Activated naive CD4-positive, alpha-beta T cell treated with anti-CD3 and anti-CD28 coated beads, Interleukin-2, amount 10 ng/mL, durations not matched to agents 7 days and 5 days (primary cell): ENCODE measurements at regions of chr2 and their contacts with region 1.

Region 1: DNA sequence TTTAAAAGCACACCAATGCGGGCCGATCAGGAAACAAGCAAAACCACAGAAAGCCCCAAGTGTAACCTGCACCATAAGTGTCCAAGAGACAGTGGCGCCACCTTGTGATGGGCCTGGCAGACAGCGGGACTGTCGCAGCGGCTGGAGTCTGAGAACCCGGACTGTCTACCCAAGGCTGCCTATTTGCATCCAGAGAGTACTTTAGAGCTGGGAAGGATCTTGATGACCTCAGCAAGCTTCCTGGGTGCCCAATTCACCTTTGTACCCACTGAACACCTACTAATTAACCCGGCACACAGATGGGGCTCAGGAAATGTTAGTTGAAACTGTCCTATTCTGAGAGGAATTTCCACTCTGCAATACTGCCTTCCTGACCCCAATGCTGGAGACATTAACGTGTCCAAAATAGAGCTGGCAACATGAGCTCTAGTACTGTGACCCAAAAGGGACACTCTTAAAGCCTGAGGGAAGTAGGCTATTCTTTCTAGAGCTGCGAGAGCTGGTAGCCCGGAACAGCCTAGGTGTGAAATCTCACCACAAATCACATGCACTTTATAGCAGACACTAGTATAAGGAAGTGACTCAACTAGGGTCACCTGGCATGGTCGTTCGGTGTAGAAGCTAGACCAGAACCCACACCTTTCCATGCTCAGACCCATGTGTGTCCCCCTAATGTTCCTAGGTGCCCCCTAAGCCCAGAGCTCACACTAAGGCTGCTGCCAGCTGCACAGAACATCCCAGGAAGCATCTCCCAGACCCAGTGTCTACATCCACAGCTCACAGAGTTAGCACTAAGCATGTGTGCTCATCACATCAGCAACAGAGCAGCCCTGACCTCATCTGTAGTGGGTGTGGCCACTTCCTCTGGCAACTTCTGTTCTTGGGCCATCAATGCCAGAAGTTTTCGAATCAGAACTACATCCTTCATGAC is 25.4 kb downstream of the POLR1A start:
- DNase-seq: peak; percentile 92
- H3K4me3 Mint-ChIP-seq: no peak overlapping the region
- H3K27ac Mint-ChIP-seq: peak overlapping the region; percentile 81
- H3K4me1 Mint-ChIP-seq: peaks cover 45% of the 10 kb centered on the region
- H3K27me3 Mint-ChIP-seq: no peaks in the 10 kb centered on the region

Region 2: GRCh38 chr2:85750587-85751575 is 329.4 kb before region 1 on chr2:
- CTCF ChIA-PET with region 1: interaction called, 17 read pairs
- DNase-seq: peak; percentile 78
- H3K4me3 Mint-ChIP-seq: no peak overlapping the region
- H3K27ac Mint-ChIP-seq: no peak overlapping the region
- H3K4me1 Mint-ChIP-seq: peaks cover 17% of the 10 kb centered on the region
- H3K27me3 Mint-ChIP-seq: peaks cover 100% of the 10 kb centered on the region

Region 3: DNA sequence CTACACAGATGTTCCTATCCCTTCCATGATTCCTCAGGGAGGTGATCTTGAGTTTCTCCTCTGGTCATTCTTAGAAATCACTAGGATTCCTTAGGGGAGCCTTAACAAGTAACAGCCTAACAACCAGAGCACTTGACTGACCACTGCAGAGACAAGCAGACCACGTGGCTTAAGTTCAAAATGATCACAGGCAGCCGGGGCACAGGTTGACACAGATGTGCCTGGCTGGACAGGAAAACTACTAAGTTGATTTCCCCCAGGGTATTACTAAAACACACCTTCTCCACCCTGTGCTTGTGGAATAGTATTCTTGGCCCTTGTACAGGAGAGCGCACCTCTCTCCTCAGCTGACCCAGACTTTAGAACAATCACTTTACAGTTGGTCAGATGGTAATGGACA is 221.4 kb before region 1 on chr2:
- CTCF ChIA-PET with region 1: interaction called, 10 read pairs
- DNase-seq: no peak
- H3K4me3 Mint-ChIP-seq: no peak overlapping the region
- H3K27ac Mint-ChIP-seq: no peak overlapping the region
- H3K4me1 Mint-ChIP-seq: peaks cover 70% of the 10 kb centered on the region
- H3K27me3 Mint-ChIP-seq: no peaks in the 10 kb centered on the region

Region 4: GRCh38 chr2:86035883-86036668 is 44.2 kb before region 1 on chr2:
- CTCF ChIA-PET with region 1: interaction called, 44 read pairs
- DNase-seq: peak; percentile 87
- H3K4me3 Mint-ChIP-seq: peak overlapping the region; percentile 62
- H3K27ac Mint-ChIP-seq: peak overlapping the region; percentile 99
- H3K4me1 Mint-ChIP-seq: peaks cover 88% of the 10 kb centered on the region
- H3K27me3 Mint-ChIP-seq: no peaks in the 10 kb centered on the region